ENCODE measurements at regions of chr2 and their contacts with region 1.

Region 1: GRCh38 chr2:17719562-17720371 is 33.8 kb downstream of the SMC6 start:
- DNase-seq: peak; percentile 21
- H3K4me3 Mint-ChIP-seq: no peak overlapping the region
- H3K27ac Mint-ChIP-seq: no peak overlapping the region
- H3K4me1 Mint-ChIP-seq: no peaks in the 10 kb centered on the region
- H3K27me3 Mint-ChIP-seq: no peaks in the 10 kb centered on the region
- CTCF ChIP-seq: peak; percentile 63

Region 2: GRCh38 chr2:17558053-17558452 is 161.7 kb before region 1 on chr2:
- CTCF ChIA-PET with region 1: no interaction called
- POLR2A ChIA-PET with region 1: no interaction called
- intact Hi-C with region 1: no loop called
- DNase-seq: no peak
- H3K4me3 Mint-ChIP-seq: no peak overlapping the region
- H3K27ac Mint-ChIP-seq: no peak overlapping the region
- H3K4me1 Mint-ChIP-seq: peaks cover 6% of the 10 kb centered on the region
- H3K27me3 Mint-ChIP-seq: no peaks in the 10 kb centered on the region
- CTCF ChIP-seq: no peak

Region 3: GRCh38 chr2:17661460-17661859 is 58.3 kb before region 1 on chr2:
- CTCF ChIA-PET with region 1: no interaction called
- POLR2A ChIA-PET with region 1: no interaction called
- intact Hi-C with region 1: no loop called
- DNase-seq: no peak
- H3K4me3 Mint-ChIP-seq: no peak overlapping the region
- H3K27ac Mint-ChIP-seq: no peak overlapping the region
- H3K4me1 Mint-ChIP-seq: no peaks in the 10 kb centered on the region
- H3K27me3 Mint-ChIP-seq: no peaks in the 10 kb centered on the region
- CTCF ChIP-seq: no peak

Region 4: GRCh38 chr2:17747684-17748452 is 28.1 kb after region 1 on chr2:
- CTCF ChIA-PET with region 1: interaction called, 10 read pairs
- POLR2A ChIA-PET with region 1: no interaction called
- intact Hi-C with region 1: no loop called
- DNase-seq: no peak
- H3K4me3 Mint-ChIP-seq: no peak overlapping the region
- H3K27ac Mint-ChIP-seq: peak overlapping the region; percentile 7
- H3K4me1 Mint-ChIP-seq: peaks cover 19% of the 10 kb centered on the region
- H3K27me3 Mint-ChIP-seq: no peaks in the 10 kb centered on the region
- CTCF ChIP-seq: no peak

Region 5: DNA sequence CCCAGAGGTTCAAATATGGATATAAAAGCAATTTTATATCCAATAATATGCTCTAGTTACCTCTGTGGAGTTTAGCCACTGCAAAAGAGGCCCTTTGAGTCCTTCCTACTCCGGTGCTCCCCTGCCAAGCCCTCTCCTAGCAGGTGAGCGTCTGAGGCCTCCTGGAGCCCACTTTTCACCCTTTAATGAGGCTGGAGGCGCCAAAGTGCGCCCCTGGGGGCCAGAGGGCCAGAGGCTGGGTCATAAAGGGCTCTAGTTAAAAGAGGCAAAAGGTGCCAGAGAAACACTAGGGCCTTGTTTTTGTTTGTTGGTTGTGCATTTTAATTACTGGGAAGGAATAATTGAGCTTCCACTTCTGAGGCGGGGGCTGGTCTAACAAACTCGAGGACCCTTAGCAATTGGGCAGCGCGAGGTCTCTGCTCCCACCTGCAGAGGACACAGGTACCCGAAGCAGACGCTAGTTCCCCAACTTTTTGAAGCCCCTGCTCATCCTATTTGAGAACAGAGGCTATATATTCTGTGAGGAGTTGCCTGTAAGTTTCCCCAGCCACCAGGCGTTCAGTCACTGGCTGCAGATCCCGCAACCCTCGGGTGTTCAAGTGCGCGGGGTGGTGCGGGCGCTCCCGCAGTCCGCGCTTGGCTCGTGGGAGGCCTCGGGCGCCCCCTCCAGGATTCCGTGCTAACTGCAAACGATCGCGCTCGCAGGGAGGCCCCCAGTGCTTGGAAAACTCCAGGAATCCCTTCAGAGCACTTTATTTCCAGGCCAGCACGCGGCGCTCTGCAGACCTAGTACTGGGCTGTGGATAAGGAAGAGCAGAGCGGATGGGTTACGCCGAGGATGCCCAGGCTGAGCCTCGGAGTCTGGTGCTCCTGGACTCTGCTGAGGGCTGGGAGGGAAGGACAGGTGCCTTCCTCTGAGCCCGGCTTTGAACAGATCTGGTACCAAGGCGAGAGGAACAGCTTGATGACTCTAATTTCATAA is 110.6 kb after region 1 on chr2:
- CTCF ChIA-PET with region 1: interaction called, 20 read pairs
- POLR2A ChIA-PET with region 1: no interaction called
- intact Hi-C with region 1: loop called (anchors 1 kb)
- DNase-seq: peak; percentile 83
- H3K4me3 Mint-ChIP-seq: peak overlapping the region; percentile 48
- H3K27ac Mint-ChIP-seq: no peak overlapping the region
- H3K4me1 Mint-ChIP-seq: peaks cover 6% of the 10 kb centered on the region
- H3K27me3 Mint-ChIP-seq: no peaks in the 10 kb centered on the region
- CTCF ChIP-seq: peak; percentile 86

Region 6: GRCh38 chr2:18178736-18179349 is 459.1 kb after region 1 on chr2:
- CTCF ChIA-PET with region 1: interaction called, 4 read pairs
- POLR2A ChIA-PET with region 1: no interaction called
- intact Hi-C with region 1: loop called (anchors 2 kb)
- DNase-seq: peak; percentile 74
- H3K4me3 Mint-ChIP-seq: no peak overlapping the region
- H3K27ac Mint-ChIP-seq: no peak overlapping the region
- H3K4me1 Mint-ChIP-seq: no peaks in the 10 kb centered on the region
- H3K27me3 Mint-ChIP-seq: peaks cover 11% of the 10 kb centered on the region
- CTCF ChIP-seq: peak; percentile 77